Heart left ventricle (tissue), 16 donors: ENCODE measurements at regions of chr7 and their contacts with region 1.

Region 1: GRCh38 chr7:26490650-26491624 is 199.3 kb downstream of the SNX10 start:
- DNase-seq: no peak
- ATAC-seq: peak in 2 of 4 donors; percentile 34 to 42
- H3K4me3 ChIP-seq: no peak overlapping the region
- H3K27ac ChIP-seq: no peak overlapping the region
- H3K4me1 ChIP-seq: no peaks in the 10 kb centered on the region
- H3K27me3 ChIP-seq: peaks cover 0 to 4% (median 0%) of the 10 kb centered on the region in 9 donors
- CTCF ChIP-seq: no peak
- POLR2A ChIP-seq: no peak

Region 2: DNA sequence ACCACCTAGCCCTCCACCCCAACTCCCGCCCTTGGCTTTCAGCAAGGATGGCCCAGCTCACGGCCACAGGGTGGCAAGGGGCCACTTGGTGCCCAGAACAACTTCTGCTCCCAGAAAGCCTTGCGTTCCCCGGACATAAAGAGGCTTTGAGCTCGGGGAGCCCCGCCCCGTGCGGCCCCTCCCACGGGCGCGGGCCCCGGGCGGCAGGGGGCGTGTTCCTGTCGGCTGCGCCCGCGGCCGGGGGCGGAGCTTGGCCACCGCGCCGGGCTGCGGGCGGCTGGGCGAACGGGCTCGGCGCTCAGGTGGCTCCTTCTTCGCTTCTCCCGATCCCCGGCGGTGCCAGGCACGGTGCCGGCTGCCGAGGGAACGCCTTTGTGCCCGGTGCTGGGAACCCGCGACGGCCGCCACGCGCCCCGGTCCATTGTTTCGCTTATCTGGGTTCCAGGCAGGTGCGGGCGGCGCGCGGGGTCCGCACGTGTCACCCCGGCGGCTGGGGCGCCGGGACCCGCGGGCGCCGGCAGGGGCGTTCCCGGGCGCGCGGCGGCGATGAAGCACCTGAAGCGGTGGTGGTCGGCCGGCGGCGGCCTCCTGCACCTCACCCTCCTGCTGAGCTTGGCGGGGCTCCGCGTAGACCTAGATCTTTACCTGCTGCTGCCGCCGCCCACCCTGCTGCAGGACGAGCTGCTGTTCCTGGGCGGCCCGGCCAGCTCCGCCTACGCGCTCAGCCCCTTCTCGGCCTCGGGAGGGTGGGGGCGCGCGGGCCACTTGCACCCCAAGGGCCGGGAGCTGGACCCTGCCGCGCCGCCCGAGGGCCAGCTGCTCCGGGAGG is 338.8 kb before region 1 on chr7 and contains the start of gene NFE2L3:
- intact Hi-C with region 1: no loop called
- DNase-seq: peak; percentile 66 to 88 (median 75)
- ATAC-seq: peak in 3 of 4 donors; percentile 84 to 89 (median 87)
- H3K4me3 ChIP-seq: peak within 1 kb of the TSS; percentile 38 to 76 (median 57)
- H3K27ac ChIP-seq: peak within 1 kb of the TSS in 1 of 12 donors; percentile 60
- H3K4me1 ChIP-seq: peaks cover 0 to 43% (median 0%) of the 10 kb centered on the region in 12 donors
- H3K27me3 ChIP-seq: peaks cover 0 to 32% (median 19%) of the 10 kb centered on the region in 9 donors
- CTCF ChIP-seq: peak in 5 of 12 donors; percentile 7 to 35 (median 24)
- POLR2A ChIP-seq: peak in 1 of 2 donors; percentile 25
- total RNA-seq, gene NFE2L3: 0.75 to 5.6 (median 1.8) TPM

Region 3: DNA sequence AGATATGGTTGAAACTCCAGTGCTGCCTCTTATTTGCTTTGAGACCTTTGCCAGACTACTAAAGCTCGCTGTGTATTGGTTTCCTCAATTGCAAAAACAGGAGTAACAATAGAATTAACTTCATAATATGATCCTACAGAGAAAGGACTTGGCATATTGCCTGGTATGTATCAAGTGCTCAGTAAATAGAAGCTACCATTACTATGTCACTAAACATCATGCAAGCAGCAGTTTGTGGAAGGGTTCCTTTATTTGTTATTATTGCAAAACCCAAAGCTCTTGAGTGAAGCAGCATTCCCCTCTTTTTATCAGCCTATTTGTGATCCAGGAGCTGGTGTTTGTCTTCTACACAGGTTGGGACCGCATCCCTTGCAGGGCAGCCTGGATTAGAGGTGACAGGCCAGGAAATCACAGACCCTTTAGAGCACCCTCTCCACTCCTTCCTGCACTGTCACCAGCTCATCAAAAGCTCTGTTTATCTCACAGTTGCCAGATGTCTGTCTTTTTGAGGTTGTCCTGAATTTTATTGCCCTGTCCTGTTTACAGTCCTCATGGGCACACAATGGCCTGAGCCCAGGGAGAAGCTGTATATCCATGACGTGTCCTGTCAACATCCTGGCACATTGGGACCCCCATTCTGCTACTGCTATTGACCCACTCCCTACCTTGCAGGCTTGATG is 77.8 kb before region 1 on chr7:
- intact Hi-C with region 1: no loop called
- DNase-seq: no peak
- ATAC-seq: no peak
- H3K4me3 ChIP-seq: no peak overlapping the region
- H3K27ac ChIP-seq: no peak overlapping the region
- H3K4me1 ChIP-seq: no peaks in the 10 kb centered on the region
- H3K27me3 ChIP-seq: peaks cover 0 to 11% (median 0%) of the 10 kb centered on the region in 9 donors
- CTCF ChIP-seq: no peak
- POLR2A ChIP-seq: no peak

Region 4: GRCh38 chr7:26556071-26556881 is 65.3 kb after region 1 on chr7:
- intact Hi-C with region 1: loop called in 1 of 10 experiments (anchors 10 kb)
- DNase-seq: peak in 1 of 5 donors; percentile 34
- ATAC-seq: peak in 3 of 4 donors; percentile 30 to 90 (median 76)
- H3K4me3 ChIP-seq: no peak overlapping the region
- H3K27ac ChIP-seq: peak overlapping the region in 1 of 12 donors; percentile 27
- H3K4me1 ChIP-seq: no peaks in the 10 kb centered on the region
- H3K27me3 ChIP-seq: peaks cover 0 to 8% (median 0%) of the 10 kb centered on the region in 9 donors
- CTCF ChIP-seq: no peak
- POLR2A ChIP-seq: no peak

Region 5: DNA sequence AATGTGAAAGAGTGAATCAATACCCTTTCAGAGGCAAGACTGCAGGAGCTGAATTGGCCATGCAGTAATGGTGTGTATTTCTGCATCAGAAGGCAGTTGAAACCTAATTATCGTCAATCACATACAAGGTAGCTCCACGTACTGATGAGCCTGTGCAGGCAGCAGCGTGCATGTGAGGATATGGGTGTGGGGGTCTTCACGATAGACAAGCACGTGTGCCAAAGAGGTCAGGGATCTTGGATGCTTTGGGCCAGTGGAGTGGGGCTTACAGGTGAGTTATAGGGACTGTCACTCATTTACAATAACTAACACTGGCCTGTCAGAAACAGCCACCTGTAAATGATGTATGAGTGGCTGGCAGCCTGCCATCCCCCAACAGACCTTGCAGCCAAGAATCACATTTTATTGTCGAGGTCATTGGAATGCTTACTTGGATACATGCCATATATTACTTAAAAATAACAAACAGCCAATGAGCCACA is 162.5 kb after region 1 on chr7:
- intact Hi-C with region 1: no loop called
- DNase-seq: no peak
- ATAC-seq: no peak
- H3K4me3 ChIP-seq: no peak overlapping the region
- H3K27ac ChIP-seq: no peak overlapping the region
- H3K4me1 ChIP-seq: peaks cover 0 to 5% (median 0%) of the 10 kb centered on the region in 12 donors
- H3K27me3 ChIP-seq: peaks cover 0 to 19% (median under 1%) of the 10 kb centered on the region in 9 donors
- CTCF ChIP-seq: no peak
- POLR2A ChIP-seq: no peak